Cardiac septum (tissue), 1 donor: ENCODE measurements at regions of chr4 and their contacts with region 1.

Region 1: DNA sequence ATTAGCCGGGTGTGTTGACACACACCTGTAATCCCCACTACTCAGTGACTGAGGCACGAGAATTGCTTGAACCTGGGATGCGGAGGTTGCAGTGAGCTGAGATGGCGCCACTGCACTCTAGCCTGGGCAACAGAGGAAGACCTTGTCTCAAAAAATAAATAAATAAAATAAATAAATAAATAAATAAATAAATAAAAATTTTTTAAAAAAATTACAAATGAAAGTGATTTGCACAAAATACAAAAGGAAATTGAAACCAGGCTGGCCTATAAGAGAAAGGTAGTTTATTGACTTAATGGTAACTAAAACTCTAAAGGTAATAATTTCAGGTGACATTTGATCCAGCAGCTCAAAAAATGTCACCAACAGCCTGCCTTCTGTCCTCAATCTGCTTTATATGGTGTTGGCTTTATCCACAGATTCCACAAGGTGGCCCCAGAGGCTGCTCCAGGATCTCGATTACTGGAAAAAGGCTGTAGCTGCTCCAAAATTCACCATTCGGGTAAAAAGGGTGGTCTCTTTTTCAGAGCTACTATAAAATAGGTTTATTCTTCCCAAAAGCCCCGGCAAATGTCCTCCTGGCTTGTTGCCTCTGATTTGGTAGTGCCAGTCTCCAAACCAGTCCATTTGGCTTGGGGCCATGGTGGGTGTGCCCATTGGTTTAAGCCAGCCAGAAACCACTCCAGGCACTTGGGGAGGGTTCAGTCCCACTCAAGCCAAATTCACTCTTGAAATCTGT is 61.4 kb upstream of the TRIM2 start:
- DNase-seq: no peak

Region 2: GRCh38 chr4:153204247-153205027 is 61.6 kb after region 1 on chr4 and contains the start of gene TRIM2:
- intact Hi-C with region 1: loop called (anchors 5 kb)
- DNase-seq: no peak
- total RNA-seq, gene TRIM2: 23.4 TPM